Activated naive CD4-positive, alpha-beta T cell treated with anti-CD3 and anti-CD28 coated beads for 36 hours (primary cell): ENCODE measurements at regions of chr4 and their contacts with region 1.

Region 1: DNA sequence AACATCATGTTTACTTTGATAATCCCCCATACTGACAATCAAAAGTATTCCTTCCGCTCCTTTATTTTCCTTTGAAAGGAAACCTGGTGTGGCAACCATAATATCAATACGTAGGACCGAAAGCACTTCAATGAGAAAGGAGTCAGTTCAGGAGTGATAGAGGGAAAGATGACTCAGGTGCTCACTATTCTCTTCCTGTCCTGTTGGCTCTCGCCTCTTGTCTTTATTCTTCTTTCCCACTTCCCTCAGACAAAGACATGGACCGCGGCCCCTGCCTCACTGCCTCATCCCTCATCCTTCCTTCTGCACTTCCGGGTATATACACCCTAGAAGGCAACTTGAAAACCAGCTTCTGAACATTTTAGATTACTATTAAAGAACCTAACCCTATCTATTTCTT is 49.8 kb upstream of the TNIP3 start:
- DNase-seq: no peak
- H3K4me3 Mint-ChIP-seq: no peak overlapping the region
- H3K27ac Mint-ChIP-seq: no peak overlapping the region
- H3K4me1 Mint-ChIP-seq: peaks cover 22% of the 10 kb centered on the region
- H3K27me3 Mint-ChIP-seq: no peaks in the 10 kb centered on the region

Region 2: GRCh38 chr4:120855307-120856001 is 358.5 kb before region 1 on chr4:
- CTCF ChIA-PET with region 1: no interaction called
- intact Hi-C with region 1: no loop called
- DNase-seq: peak; percentile 13
- H3K4me3 Mint-ChIP-seq: no peak overlapping the region
- H3K27ac Mint-ChIP-seq: no peak overlapping the region
- H3K4me1 Mint-ChIP-seq: peaks cover 12% of the 10 kb centered on the region
- H3K27me3 Mint-ChIP-seq: no peaks in the 10 kb centered on the region

Region 3: DNA sequence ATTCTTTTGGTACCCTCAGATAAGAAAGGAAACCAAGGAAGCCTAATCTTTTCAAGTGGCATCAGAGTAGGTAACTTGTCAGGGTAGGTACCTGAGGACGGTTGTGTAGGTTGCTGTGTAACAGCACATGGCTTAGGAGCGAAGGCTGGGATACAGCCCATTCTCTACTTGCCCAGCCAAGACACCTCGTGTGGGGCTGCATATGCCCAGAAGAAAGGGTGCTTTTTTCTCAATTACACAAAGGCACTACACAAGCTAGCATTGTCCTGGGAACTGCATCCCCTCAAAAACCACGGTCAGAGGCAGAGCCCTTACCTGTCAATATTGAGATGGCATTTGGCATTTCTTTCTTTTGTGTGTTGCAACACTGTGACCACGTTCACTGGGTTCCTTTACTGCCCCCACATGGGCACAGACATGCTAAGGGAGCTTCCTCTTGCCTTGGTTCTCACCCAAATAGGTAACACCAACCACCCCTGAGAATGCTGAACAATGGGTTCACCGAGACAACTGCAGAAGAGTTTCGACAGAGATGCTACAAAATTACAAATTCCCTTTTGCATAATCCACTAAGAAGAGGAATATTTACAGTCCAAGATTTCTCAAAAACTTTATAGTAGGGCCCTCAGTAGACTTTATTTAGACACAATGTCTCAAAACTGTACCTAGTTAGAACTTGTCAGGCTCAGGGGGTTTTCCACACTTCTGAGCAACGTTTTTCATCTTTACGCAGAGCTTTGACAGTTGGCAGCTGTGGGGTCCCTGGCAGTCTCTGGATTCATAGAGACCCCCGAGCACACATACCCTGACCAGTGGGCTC is 14.0 kb before region 1 on chr4:
- CTCF ChIA-PET with region 1: interaction called, 11 read pairs
- intact Hi-C with region 1: loop called (anchors 1 kb)
- DNase-seq: peak; percentile 69
- H3K4me3 Mint-ChIP-seq: no peak overlapping the region
- H3K27ac Mint-ChIP-seq: peak overlapping the region; percentile 62
- H3K4me1 Mint-ChIP-seq: peaks cover 24% of the 10 kb centered on the region
- H3K27me3 Mint-ChIP-seq: no peaks in the 10 kb centered on the region

Region 4: DNA sequence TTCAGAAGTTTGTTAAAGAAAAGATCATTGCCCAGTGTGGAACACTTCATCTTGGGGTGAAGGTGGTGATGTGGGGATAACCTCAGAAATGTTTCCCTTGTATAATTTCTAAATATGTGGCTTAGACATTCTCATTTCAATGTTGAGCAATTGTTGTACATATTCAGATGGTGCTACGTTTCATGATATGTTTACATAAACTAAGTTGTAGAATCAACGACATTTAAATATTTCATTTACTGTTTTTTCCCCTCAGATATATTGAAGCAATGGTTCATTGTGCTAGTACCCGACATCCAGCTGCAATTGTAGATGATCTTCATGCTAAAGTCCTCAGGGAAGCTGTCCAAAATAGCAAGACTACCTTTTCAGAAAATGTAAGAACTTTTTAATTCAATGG is 1030.8 kb after region 1 on chr4:
- CTCF ChIA-PET with region 1: no interaction called
- intact Hi-C with region 1: no loop called
- DNase-seq: no peak
- H3K4me3 Mint-ChIP-seq: no peak overlapping the region
- H3K27ac Mint-ChIP-seq: no peak overlapping the region
- H3K4me1 Mint-ChIP-seq: no peaks in the 10 kb centered on the region
- H3K27me3 Mint-ChIP-seq: no peaks in the 10 kb centered on the region

Region 5: GRCh38 chr4:122379239-122379638 is 1165.3 kb after region 1 on chr4:
- CTCF ChIA-PET with region 1: no interaction called
- intact Hi-C with region 1: no loop called
- DNase-seq: no peak
- H3K4me3 Mint-ChIP-seq: no peak overlapping the region
- H3K27ac Mint-ChIP-seq: no peak overlapping the region
- H3K4me1 Mint-ChIP-seq: no peaks in the 10 kb centered on the region
- H3K27me3 Mint-ChIP-seq: no peaks in the 10 kb centered on the region